ENCODE measurements at regions of chr6 and their contacts with region 1.

Region 1: GRCh38 chr6:71012866-71013469 is 56.1 kb upstream of the B3GAT2 start:
- ATAC-seq: peak; percentile 64 to 96 (median 88)
- H3K4me3 ChIP-seq: no peak overlapping the region
- H3K27ac ChIP-seq: no peak overlapping the region
- H3K4me1 ChIP-seq: peaks cover 12 to 22% of the 10 kb centered on the region in 2 donors

Region 2: GRCh38 chr6:70369332-70369950 is 643.5 kb before region 1 on chr6:
- in situ Hi-C with region 1: loop called in 1 of 9 experiments (anchors 25 kb)
- ATAC-seq: peak in 5 of 8 experiments; percentile 28 to 84 (median 84)
- H3K4me3 ChIP-seq: no peak overlapping the region
- H3K27ac ChIP-seq: no peak overlapping the region
- H3K4me1 ChIP-seq: no peaks in the 10 kb centered on the region

Region 3: DNA sequence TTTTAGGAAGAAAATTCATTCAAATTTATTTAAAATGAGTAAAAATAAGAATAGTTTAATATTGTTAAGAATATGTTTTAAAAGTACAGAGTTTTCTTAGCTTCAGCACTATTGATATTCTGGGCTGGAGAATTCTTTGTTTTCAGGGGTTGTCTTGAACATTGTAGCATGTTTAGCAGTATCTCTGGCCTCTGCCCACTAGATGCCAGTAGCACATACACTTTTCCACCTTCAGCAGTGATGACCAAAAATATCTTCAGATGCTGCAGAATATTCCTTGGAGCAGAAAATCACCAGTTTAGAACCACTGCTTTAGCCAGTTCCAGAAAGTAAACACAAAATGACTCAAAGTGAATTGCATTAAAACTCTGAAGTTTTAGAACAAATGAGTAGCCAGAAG is 465.7 kb before region 1 on chr6:
- in situ Hi-C with region 1: loop called in 1 of 9 experiments (anchors 25 kb)
- ATAC-seq: peak in 7 of 8 experiments; percentile 33 to 79 (median 52)
- H3K4me3 ChIP-seq: no peak overlapping the region
- H3K27ac ChIP-seq: no peak overlapping the region
- H3K4me1 ChIP-seq: no peaks in the 10 kb centered on the region

Region 4: GRCh38 chr6:70706491-70707123 is 306.4 kb before region 1 on chr6:
- in situ Hi-C with region 1: loop called in 1 of 9 experiments (anchors 25 kb)
- ATAC-seq: no peak
- H3K4me3 ChIP-seq: no peak overlapping the region
- H3K27ac ChIP-seq: no peak overlapping the region
- H3K4me1 ChIP-seq: no peaks in the 10 kb centered on the region